GM10248 (cell line): ENCODE measurements at regions of chr9 and their contacts with region 1.

Region 1: DNA sequence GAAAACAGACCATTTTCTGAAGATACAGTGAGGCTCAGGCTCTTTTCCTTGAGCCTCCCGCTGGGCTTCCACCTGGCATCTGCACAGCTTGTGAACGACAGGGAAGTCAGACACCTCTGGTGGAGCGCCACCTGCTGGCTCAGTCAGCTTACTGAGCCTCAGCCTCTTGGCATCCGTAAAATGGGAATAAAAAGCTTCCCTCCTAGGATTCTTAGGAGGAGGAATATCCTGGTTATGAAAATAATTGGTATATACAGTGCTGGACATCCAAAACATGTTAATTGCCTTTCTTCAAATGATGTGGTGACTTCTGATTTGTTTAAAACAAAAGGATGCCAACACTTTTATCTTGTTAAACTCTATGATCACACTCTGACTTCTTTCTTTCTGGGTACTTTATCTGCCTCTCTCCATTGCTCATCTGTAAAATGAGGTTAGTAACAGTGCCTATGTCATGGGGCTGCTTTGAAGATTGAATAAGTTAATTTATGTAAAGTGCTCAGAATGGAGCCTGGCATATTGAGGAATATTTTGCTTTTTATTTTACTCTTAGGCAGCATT is 67.5 kb downstream of the MAMDC2 start:
- DNase-seq: peak; percentile 39
- CTCF ChIP-seq: peak; percentile 94

Region 2: GRCh38 chr9:69981686-69982450 is 129.3 kb before region 1 on chr9:
- CTCF ChIA-PET with region 1: interaction called, 18 read pairs
- POLR2A ChIA-PET with region 1: no interaction called
- DNase-seq: no peak
- CTCF ChIP-seq: no peak

Region 3: GRCh38 chr9:70060883-70061507 is 50.1 kb before region 1 on chr9:
- CTCF ChIA-PET with region 1: interaction called, 11 read pairs
- POLR2A ChIA-PET with region 1: no interaction called
- DNase-seq: no peak
- CTCF ChIP-seq: no peak

Region 4: GRCh38 chr9:70093944-70094343 is 17.2 kb before region 1 on chr9:
- CTCF ChIA-PET with region 1: interaction called, 25 read pairs
- POLR2A ChIA-PET with region 1: no interaction called
- DNase-seq: no peak
- CTCF ChIP-seq: no peak

Region 5: GRCh38 chr9:70160686-70161600 is 49.8 kb after region 1 on chr9:
- CTCF ChIA-PET with region 1: interaction called, 12 read pairs
- POLR2A ChIA-PET with region 1: no interaction called
- DNase-seq: no peak
- CTCF ChIP-seq: no peak

Region 6: GRCh38 chr9:70250221-70250620 is 139.1 kb after region 1 on chr9:
- CTCF ChIA-PET with region 1: no interaction called
- POLR2A ChIA-PET with region 1: no interaction called
- DNase-seq: no peak
- CTCF ChIP-seq: no peak